B cell (primary cell): ENCODE measurements at regions of chr12 and their contacts with region 1.

Region 1: DNA sequence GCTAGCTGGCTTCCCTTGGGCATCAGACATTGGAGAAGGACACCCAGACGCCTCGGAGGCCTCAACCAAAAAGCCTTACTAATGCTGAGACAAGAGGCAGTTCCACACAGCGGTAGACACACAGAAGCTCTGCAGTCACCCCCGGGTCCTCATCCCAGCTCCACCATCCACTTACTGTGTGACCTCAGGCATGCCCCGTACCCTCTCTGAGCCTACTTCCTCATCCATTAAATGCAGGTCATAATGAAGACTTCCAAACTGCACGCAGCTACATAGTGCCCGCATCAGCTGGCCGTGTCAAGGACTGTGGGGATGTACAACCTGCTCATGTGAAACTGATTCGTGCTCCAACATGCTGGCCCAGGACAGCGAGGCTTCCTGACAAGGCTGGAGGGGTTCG is 72.3 kb downstream of the KDM2B start:
- DNase-seq: no peak
- ATAC-seq: no peak
- H3K4me3 ChIP-seq: no peak overlapping the region
- H3K4me3 Mint-ChIP-seq: no peak overlapping the region
- H3K27ac ChIP-seq: no peak overlapping the region
- H3K27ac Mint-ChIP-seq: peak overlapping the region; percentile 32
- H3K4me1 ChIP-seq: peaks cover 4 to 5% of the 10 kb centered on the region in 2 donors
- H3K4me1 Mint-ChIP-seq: peaks cover 10% of the 10 kb centered on the region
- H3K27me3 ChIP-seq: no peaks in the 10 kb centered on the region
- H3K27me3 Mint-ChIP-seq: no peaks in the 10 kb centered on the region
- CTCF ChIP-seq: no peak

Region 2: DNA sequence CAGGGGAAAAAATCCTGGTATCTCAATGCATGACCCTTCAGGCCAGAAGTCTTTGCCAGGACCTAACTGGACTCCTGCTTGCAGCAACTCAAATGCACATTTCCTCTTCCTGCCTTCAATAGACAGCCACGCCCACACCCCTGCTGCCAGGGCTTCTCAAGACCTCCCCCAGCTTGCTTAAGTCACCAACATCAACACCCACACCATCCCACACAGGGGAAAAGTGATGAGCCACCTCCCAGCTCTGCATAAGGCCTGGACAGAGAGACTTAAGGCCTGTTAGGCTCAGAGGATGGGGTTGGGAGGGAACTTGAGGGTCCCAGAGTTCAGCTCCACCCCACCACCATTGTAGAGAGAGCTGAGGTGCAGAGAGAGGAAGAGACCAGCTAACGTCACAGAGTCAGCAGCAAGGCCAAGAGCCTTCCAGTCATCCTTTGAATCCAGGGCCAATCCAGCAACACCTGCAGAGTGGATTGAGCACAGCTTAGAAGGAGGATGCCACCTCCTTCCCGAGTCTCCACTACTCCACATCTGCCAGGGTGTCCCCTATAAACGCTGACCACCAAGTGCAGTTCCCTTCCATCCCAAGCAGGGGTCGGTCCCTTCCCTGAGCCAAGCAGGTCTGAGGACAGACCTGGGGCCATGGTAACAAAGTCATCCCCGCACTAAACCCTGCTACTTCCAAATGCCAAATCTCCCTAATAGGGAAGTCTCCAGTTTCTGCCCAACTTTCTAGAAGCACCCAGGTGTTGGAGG is 22.2 kb after region 1 on chr12:
- CTCF ChIA-PET with region 1: interaction called, 4 read pairs
- POLR2A ChIA-PET with region 1: interaction called, 10 read pairs
- intact Hi-C with region 1: no loop called
- DNase-seq: peak; percentile 83
- ATAC-seq: peak; percentile 58
- H3K4me3 ChIP-seq: peak overlapping the region in 1 of 5 experiments; percentile 16
- H3K4me3 Mint-ChIP-seq: peak overlapping the region; percentile 59
- H3K27ac ChIP-seq: peak overlapping the region; percentile 52 to 92
- H3K27ac Mint-ChIP-seq: peak overlapping the region; percentile 91
- H3K4me1 ChIP-seq: peaks cover 48 to 57% of the 10 kb centered on the region in 2 donors
- H3K4me1 Mint-ChIP-seq: peaks cover 57% of the 10 kb centered on the region
- H3K27me3 ChIP-seq: no peaks in the 10 kb centered on the region
- H3K27me3 Mint-ChIP-seq: no peaks in the 10 kb centered on the region
- CTCF ChIP-seq: no peak